Naive thymus-derived CD4-positive, alpha-beta T cell (primary cell): ENCODE measurements at regions of chr2 and their contacts with region 1.

Region 1: GRCh38 chr2:41853427-41854216 is 194.2 kb upstream of the PKDCC start:
- DNase-seq: no peak
- ATAC-seq: no peak
- H3K4me3 ChIP-seq: no peak overlapping the region
- H3K4me3 Mint-ChIP-seq: no peak overlapping the region
- H3K27ac ChIP-seq: no peak overlapping the region
- H3K27ac Mint-ChIP-seq: no peak overlapping the region
- H3K4me1 ChIP-seq: no peaks in the 10 kb centered on the region
- H3K4me1 Mint-ChIP-seq: no peaks in the 10 kb centered on the region
- H3K27me3 ChIP-seq: no peaks in the 10 kb centered on the region
- H3K27me3 Mint-ChIP-seq: peaks cover 5 to 21% (median 14%) of the 10 kb centered on the region in 5 donors

Region 2: DNA sequence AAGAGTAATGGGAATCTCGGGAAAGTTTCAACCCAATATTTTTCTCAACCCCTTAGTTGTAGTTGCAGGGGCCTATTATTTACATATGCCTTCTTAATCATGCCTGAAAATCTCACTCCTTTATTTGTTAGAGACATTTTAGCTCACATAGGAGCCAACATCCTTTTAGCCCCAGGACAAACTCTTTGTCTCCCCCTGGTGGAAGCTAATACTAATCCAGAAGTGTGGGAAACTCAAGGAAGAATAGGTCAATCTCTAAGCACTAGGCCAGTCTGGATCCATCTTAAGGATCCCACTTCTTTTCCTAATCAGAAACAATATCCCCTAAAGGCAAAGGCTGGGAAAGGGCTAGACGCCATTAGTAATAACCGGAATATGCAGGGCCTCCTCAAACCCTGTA is 356.7 kb before region 1 on chr2:
- CTCF ChIA-PET with region 1: no interaction called
- POLR2A ChIA-PET with region 1: no interaction called
- intact Hi-C with region 1: no loop called
- DNase-seq: no peak
- ATAC-seq: no peak
- H3K4me3 ChIP-seq: no peak overlapping the region
- H3K4me3 Mint-ChIP-seq: no peak overlapping the region
- H3K27ac ChIP-seq: no peak overlapping the region
- H3K27ac Mint-ChIP-seq: no peak overlapping the region
- H3K4me1 ChIP-seq: no peaks in the 10 kb centered on the region
- H3K4me1 Mint-ChIP-seq: no peaks in the 10 kb centered on the region
- H3K27me3 ChIP-seq: no peaks in the 10 kb centered on the region
- H3K27me3 Mint-ChIP-seq: no peaks in the 10 kb centered on the region

Region 3: GRCh38 chr2:41782306-41783158 is 71.1 kb before region 1 on chr2:
- CTCF ChIA-PET with region 1: no interaction called
- POLR2A ChIA-PET with region 1: no interaction called
- intact Hi-C with region 1: no loop called
- DNase-seq: peak in 5 of 9 donors; percentile 13 to 41 (median 34)
- ATAC-seq: no peak
- H3K4me3 ChIP-seq: no peak overlapping the region
- H3K4me3 Mint-ChIP-seq: no peak overlapping the region
- H3K27ac ChIP-seq: no peak overlapping the region
- H3K27ac Mint-ChIP-seq: no peak overlapping the region
- H3K4me1 ChIP-seq: no peaks in the 10 kb centered on the region
- H3K4me1 Mint-ChIP-seq: no peaks in the 10 kb centered on the region
- H3K27me3 ChIP-seq: no peaks in the 10 kb centered on the region
- H3K27me3 Mint-ChIP-seq: peaks cover 6 to 26% (median 9%) of the 10 kb centered on the region in 5 donors

Region 4: DNA sequence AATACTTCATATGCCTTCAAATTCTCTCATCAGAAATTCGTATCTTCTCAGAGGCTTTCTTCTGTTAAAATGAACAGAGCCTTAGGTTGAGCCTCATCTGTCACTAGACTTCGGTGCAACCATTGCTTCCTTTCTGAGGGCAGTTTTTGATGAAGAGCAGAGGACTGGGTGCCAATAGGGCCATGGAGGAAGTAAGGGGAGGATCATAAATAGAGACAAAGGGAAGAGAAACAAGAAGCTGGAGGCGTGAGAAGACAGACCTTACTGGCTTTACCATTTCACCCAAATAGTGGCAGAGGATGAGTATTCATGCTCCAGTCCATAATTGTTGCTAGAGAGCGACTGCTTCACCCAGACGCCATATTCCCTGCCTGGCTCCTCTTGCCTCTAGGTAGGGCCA is 21.4 kb before region 1 on chr2:
- CTCF ChIA-PET with region 1: no interaction called
- POLR2A ChIA-PET with region 1: no interaction called
- intact Hi-C with region 1: no loop called
- DNase-seq: no peak
- ATAC-seq: no peak
- H3K4me3 ChIP-seq: no peak overlapping the region
- H3K4me3 Mint-ChIP-seq: no peak overlapping the region
- H3K27ac ChIP-seq: no peak overlapping the region
- H3K27ac Mint-ChIP-seq: no peak overlapping the region
- H3K4me1 ChIP-seq: no peaks in the 10 kb centered on the region
- H3K4me1 Mint-ChIP-seq: no peaks in the 10 kb centered on the region
- H3K27me3 ChIP-seq: peaks cover 0 to 2% of the 10 kb centered on the region in 2 donors
- H3K27me3 Mint-ChIP-seq: peaks cover 28 to 63% (median 45%) of the 10 kb centered on the region in 5 donors

Region 5: GRCh38 chr2:42086500-42086953 is 232.9 kb after region 1 on chr2:
- CTCF ChIA-PET with region 1: interaction called, 5 read pairs
- POLR2A ChIA-PET with region 1: no interaction called
- intact Hi-C with region 1: loop called in 1 of 2 experiments (anchors 1 kb)
- DNase-seq: peak in 7 of 9 donors; percentile 18 to 59 (median 50)
- ATAC-seq: peak; percentile 62
- H3K4me3 ChIP-seq: no peak overlapping the region
- H3K4me3 Mint-ChIP-seq: no peak overlapping the region
- H3K27ac ChIP-seq: no peak overlapping the region
- H3K27ac Mint-ChIP-seq: no peak overlapping the region
- H3K4me1 ChIP-seq: no peaks in the 10 kb centered on the region
- H3K4me1 Mint-ChIP-seq: peaks cover 0 to 10% (median 7%) of the 10 kb centered on the region in 7 donors
- H3K27me3 ChIP-seq: no peaks in the 10 kb centered on the region
- H3K27me3 Mint-ChIP-seq: peaks cover 0 to 25% (median 6%) of the 10 kb centered on the region in 5 donors